HepG2 (cell line): ENCODE measurements at regions of chr1 and their contacts with region 1.

Region 1: GRCh38 chr1:150067184-150068036 is at the start of gene VPS45:
- DNase-seq: peak; percentile 93
- ATAC-seq: peak; percentile 99
- H3K4me3 ChIP-seq: peak within 1 kb of the TSS; percentile 58 to 91 (median 85)
- H3K27ac ChIP-seq: peak within 1 kb of the TSS; percentile 96
- H3K4me1 ChIP-seq: peaks cover 23% of the 10 kb centered on the region
- H3K27me3 ChIP-seq: no peaks in the 10 kb centered on the region; a peak in 1 of 5 replicates
- CTCF ChIP-seq: peak; percentile 13; the same call in 1 of the 2 replicates
- EP300 ChIP-seq: peak in 1 of 2 experiments; percentile 58; a peak in 1 of 4 replicates
- POLR2A ChIP-seq: peak; percentile 64 to 80
- RAD21 ChIP-seq: peak; percentile 45
- total RNA-seq, gene VPS45: 25.2 and 26.5 TPM in 2 replicates

Region 2: DNA sequence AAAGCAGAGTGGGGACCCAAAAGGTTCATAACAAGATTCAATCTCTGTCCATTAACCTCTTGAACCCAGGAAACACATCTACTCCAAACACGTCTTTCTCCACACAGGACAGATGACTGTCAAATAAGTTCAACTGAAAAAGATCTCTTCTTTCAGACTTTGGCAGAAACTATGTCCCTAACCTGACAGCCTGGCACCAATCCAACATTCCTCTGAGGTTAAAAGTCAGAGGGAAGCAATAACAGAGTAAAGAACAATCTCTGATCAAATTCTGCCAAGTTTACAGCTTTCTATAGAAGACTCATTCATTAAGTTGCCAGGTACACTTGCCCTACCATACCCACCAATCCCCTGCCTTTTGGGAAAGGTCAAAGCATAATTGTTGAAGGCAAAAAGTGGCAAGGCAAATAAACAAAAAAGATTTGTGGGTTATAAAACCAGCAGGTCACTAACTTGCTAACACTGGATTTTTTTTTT is 88.8 kb before region 1 on chr1:
- CTCF ChIA-PET with region 1: no interaction called
- POLR2A ChIA-PET with region 1: no interaction called
- in situ Hi-C with region 1: no loop called
- intact Hi-C with region 1: loop called (anchors 5 kb)
- DNase-seq: peak; percentile 86
- ATAC-seq: peak; percentile 85
- H3K4me3 ChIP-seq: no peak overlapping the region
- H3K27ac ChIP-seq: peak overlapping the region; percentile 22
- H3K4me1 ChIP-seq: peaks cover 44% of the 10 kb centered on the region
- H3K27me3 ChIP-seq: no peaks in the 10 kb centered on the region
- CTCF ChIP-seq: no peak
- EP300 ChIP-seq: 0 out of 4 replicates have a peak, but pooled peaks of 1 of the 2 experiments have one; percentile 11
- POLR2A ChIP-seq: no peak
- RAD21 ChIP-seq: no peak

Region 3: DNA sequence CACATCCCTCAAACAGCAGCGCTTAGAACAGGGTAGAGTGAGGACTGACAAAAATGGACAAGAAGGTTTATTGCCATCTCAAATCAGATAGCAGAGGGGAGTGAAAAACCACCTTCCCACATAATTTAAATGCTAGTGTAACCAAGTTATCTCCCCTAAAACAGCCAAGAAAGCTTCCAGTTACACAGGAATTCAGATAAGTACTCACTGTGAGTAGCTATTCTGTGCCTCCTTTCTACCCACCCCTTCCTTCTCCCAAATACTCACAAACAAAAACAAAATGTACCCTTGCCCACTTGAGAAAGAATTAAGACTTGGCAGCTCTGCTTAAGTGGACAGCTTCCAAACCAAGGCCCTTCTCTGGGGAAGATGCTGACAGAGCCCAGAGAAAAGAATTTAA is 66.0 kb before region 1 on chr1:
- CTCF ChIA-PET with region 1: no interaction called
- POLR2A ChIA-PET with region 1: no interaction called
- in situ Hi-C with region 1: no loop called
- intact Hi-C with region 1: no loop called
- DNase-seq: no peak
- ATAC-seq: no peak
- H3K4me3 ChIP-seq: no peak overlapping the region
- H3K27ac ChIP-seq: no peak overlapping the region
- H3K4me1 ChIP-seq: peaks cover 3% of the 10 kb centered on the region
- H3K27me3 ChIP-seq: no peaks in the 10 kb centered on the region
- CTCF ChIP-seq: no peak
- EP300 ChIP-seq: no peak
- POLR2A ChIP-seq: no peak
- RAD21 ChIP-seq: no peak

Region 4: GRCh38 chr1:150162862-150163706 is 95.7 kb after region 1 on chr1:
- CTCF ChIA-PET with region 1: no interaction called
- POLR2A ChIA-PET with region 1: no interaction called
- in situ Hi-C with region 1: loop called (anchors 5 kb)
- intact Hi-C with region 1: loop called (anchors 5 kb)
- DNase-seq: peak; percentile 95
- ATAC-seq: peak; percentile 96
- H3K4me3 ChIP-seq: peak overlapping the region; percentile 47 to 66 (median 59)
- H3K27ac ChIP-seq: peak overlapping the region; percentile 37
- H3K4me1 ChIP-seq: peaks cover 37% of the 10 kb centered on the region
- H3K27me3 ChIP-seq: peaks cover 1 to 13% of the 10 kb centered on the region in 2 experiments; a peak in 2 of 5 replicates
- CTCF ChIP-seq: no peak
- EP300 ChIP-seq: peak in 1 of 2 experiments; percentile 27; a peak in 1 of 4 replicates
- POLR2A ChIP-seq: peak; percentile 41 to 44; a peak in 3 of 4 replicates
- RAD21 ChIP-seq: no peak